ENCODE measurements at regions of chr1 and their contacts with region 1.

Region 1: GRCh38 chr1:177256153-177257075 is 85.7 kb downstream of the BRINP2 start:
- DNase-seq: peak; percentile 97
- ATAC-seq: peak; percentile 72
- H3K4me3 ChIP-seq: peak overlapping the region; percentile 52
- H3K27ac ChIP-seq: peak overlapping the region; percentile 100
- H3K4me1 ChIP-seq: peaks cover 33% of the 10 kb centered on the region
- H3K27me3 ChIP-seq: no peaks in the 10 kb centered on the region
- CTCF ChIP-seq: peak; percentile 76

Region 2: GRCh38 chr1:177091040-177091439 is 165.4 kb before region 1 on chr1:
- CTCF ChIA-PET with region 1: no interaction called
- POLR2A ChIA-PET with region 1: interaction called, 6 read pairs
- intact Hi-C with region 1: loop called (anchors 1 kb)
- DNase-seq: peak; percentile 88
- ATAC-seq: peak; percentile 94
- H3K4me3 ChIP-seq: no peak overlapping the region
- H3K27ac ChIP-seq: peak overlapping the region; percentile 84
- H3K4me1 ChIP-seq: peaks cover 29% of the 10 kb centered on the region
- H3K27me3 ChIP-seq: no peaks in the 10 kb centered on the region
- CTCF ChIP-seq: no peak

Region 3: GRCh38 chr1:177209357-177209756 is 47.1 kb before region 1 on chr1:
- CTCF ChIA-PET with region 1: interaction called, 9 read pairs
- POLR2A ChIA-PET with region 1: no interaction called
- intact Hi-C with region 1: loop called (anchors 2 kb)
- DNase-seq: peak; percentile 98
- ATAC-seq: peak; percentile 97
- H3K4me3 ChIP-seq: no peak overlapping the region
- H3K27ac ChIP-seq: peak overlapping the region; percentile 95
- H3K4me1 ChIP-seq: peaks cover 23% of the 10 kb centered on the region
- H3K27me3 ChIP-seq: no peaks in the 10 kb centered on the region
- CTCF ChIP-seq: no peak

Region 4: GRCh38 chr1:177305040-177306018 is 48.9 kb after region 1 on chr1:
- CTCF ChIA-PET with region 1: no interaction called
- POLR2A ChIA-PET with region 1: no interaction called
- intact Hi-C with region 1: loop called (anchors 2 kb)
- DNase-seq: no peak
- ATAC-seq: no peak
- H3K4me3 ChIP-seq: no peak overlapping the region
- H3K27ac ChIP-seq: no peak overlapping the region
- H3K4me1 ChIP-seq: peaks cover 42% of the 10 kb centered on the region
- H3K27me3 ChIP-seq: no peaks in the 10 kb centered on the region
- CTCF ChIP-seq: no peak

Region 5: GRCh38 chr1:177948336-177948972 is 692.0 kb after region 1 on chr1:
- CTCF ChIA-PET with region 1: no interaction called
- POLR2A ChIA-PET with region 1: no interaction called
- intact Hi-C with region 1: loop called (anchors 5 kb)
- DNase-seq: peak; percentile 70
- ATAC-seq: peak; percentile 76
- H3K4me3 ChIP-seq: peak overlapping the region; percentile 47; the same call in 1 of the 2 replicates
- H3K27ac ChIP-seq: no peak overlapping the region
- H3K4me1 ChIP-seq: no peaks in the 10 kb centered on the region
- H3K27me3 ChIP-seq: no peaks in the 10 kb centered on the region
- CTCF ChIP-seq: peak; percentile 84

Measured in PC-3 (cell line).